Heart left ventricle (tissue), 16 donors: ENCODE measurements at regions of chr11 and their contacts with region 1.

Region 1: DNA sequence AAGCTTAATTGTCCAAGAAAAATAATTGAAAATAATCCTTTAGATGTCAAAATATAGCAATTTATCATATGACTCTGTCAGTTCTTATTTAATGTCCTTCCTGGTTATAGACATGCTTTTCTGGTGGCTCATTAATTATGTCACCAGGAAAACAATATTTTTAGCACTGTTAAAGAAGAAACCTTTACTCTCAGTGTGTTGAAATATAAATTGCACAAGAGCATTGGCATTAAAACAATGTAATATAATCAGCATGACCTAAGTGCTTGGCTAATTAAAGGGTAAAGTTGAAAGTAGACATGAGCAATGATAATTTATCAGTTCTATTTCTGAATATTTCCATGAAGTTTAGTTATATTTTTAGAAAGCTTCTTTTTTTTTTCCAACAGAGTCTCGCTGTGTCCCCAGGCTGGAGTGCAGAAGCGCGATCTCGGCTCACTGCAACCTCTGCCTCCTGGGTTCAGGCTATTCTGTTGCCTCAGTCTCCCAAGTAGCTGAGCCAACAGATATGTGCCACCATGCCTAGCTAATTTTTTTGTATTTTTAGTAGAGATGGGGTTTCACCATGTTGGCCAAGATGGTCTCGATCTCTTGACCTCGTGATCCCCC is 232.3 kb downstream of the JRKL start:
- DNase-seq: peak in 4 of 5 donors; percentile 11 to 62 (median 42)
- ATAC-seq: peak; percentile 94 to 98 (median 95)
- H3K4me3 ChIP-seq: no peak overlapping the region
- H3K27ac ChIP-seq: peak overlapping the region in 11 of 12 donors; percentile 35 to 86 (median 65)
- H3K4me1 ChIP-seq: peaks cover 0 to 6% (median 0%) of the 10 kb centered on the region in 12 donors
- H3K27me3 ChIP-seq: no peaks in the 10 kb centered on the region
- CTCF ChIP-seq: no peak
- POLR2A ChIP-seq: no peak

Region 2: GRCh38 chr11:96481771-96482170 is 140.4 kb before region 1 on chr11:
- intact Hi-C with region 1: loop called in 1 of 10 experiments (anchors 5 kb)
- DNase-seq: no peak
- ATAC-seq: peak; percentile 61 to 86 (median 82)
- H3K4me3 ChIP-seq: no peak overlapping the region
- H3K27ac ChIP-seq: peak overlapping the region in 7 of 12 donors; percentile 8 to 70 (median 44)
- H3K4me1 ChIP-seq: peaks cover 0 to 33% (median 14%) of the 10 kb centered on the region in 12 donors
- H3K27me3 ChIP-seq: no peaks in the 10 kb centered on the region
- CTCF ChIP-seq: no peak
- POLR2A ChIP-seq: no peak

Region 3: DNA sequence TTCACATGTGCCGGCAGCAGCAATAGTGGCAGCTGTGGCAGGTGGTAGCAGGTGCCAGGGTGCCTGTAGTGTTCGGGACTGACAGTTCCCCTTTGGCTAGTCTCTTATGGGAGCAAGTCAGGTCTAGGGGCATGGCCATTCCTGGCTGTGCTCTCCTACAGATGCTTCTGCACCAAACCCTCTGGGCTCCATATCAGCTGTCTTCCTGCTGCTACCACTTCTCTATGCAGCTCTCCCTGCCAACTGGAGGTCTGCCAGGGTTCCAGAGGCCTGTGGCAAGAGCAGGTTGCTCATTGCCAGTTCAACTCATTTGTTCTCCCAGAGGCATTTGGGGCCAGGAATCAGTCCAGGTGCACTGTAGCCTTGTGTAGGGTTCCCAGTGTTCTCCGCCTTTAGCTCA is 241.4 kb after region 1 on chr11:
- intact Hi-C with region 1: loop called in 1 of 10 experiments (anchors 5 kb)
- DNase-seq: peak; percentile 79 to 96 (median 89)
- ATAC-seq: peak; percentile 98 to 99 (median 98)
- H3K4me3 ChIP-seq: no peak overlapping the region
- H3K27ac ChIP-seq: peak overlapping the region in 7 of 12 donors; percentile 33 to 78 (median 55)
- H3K4me1 ChIP-seq: peaks cover 0 to 5% (median 0%) of the 10 kb centered on the region in 12 donors
- H3K27me3 ChIP-seq: no peaks in the 10 kb centered on the region
- CTCF ChIP-seq: no peak
- POLR2A ChIP-seq: no peak